ENCODE measurements at regions of chr6 and their contacts with region 1.

Region 1: GRCh38 chr6:107847844-107848802 is 24.0 kb upstream of the SCML4 start:
- DNase-seq: peak; percentile 80
- H3K27ac ChIP-seq: no peak overlapping the region
- CTCF ChIP-seq: peak; percentile 94

Region 2: DNA sequence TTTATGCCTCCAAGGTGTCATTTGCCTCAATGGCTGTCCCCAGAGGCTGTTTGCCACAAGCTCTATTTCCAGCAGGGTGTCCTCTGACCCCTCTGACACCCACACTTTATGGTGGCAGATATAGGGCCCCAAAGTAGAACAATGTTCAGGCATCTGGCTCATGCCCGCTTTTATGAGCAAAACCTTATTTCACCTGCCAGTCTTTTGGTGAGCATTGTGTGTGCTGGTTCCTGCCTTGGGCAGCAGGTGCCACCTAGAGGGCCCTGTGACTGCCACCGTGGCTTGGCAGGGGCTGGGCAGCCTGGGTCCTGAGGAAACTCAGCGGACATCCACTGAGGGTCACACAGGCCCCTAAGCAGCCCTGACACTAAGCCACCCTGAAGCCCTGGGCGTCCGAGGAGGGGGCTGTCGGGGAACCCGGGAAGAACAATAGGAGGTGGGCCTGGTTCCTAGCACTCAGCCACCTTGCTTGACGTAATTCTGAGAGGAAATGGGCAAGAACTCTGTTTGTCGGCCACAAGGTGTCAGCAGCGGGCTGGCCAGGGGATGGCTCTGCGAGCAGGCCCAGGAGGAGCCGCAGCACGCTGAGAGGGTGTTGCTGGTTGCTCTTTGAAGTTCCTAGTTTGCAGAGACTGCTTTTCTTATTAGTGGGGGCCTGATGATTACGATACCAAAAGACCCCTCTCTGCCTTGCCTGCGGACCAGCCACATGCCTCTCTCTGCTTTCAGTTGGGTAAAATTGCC is 173.0 kb before region 1 on chr6:
- CTCF ChIA-PET with region 1: interaction called, 11 read pairs
- POLR2A ChIA-PET with region 1: no interaction called
- DNase-seq: peak; percentile 80
- H3K27ac ChIP-seq: no peak overlapping the region
- CTCF ChIP-seq: peak; percentile 87

Region 3: DNA sequence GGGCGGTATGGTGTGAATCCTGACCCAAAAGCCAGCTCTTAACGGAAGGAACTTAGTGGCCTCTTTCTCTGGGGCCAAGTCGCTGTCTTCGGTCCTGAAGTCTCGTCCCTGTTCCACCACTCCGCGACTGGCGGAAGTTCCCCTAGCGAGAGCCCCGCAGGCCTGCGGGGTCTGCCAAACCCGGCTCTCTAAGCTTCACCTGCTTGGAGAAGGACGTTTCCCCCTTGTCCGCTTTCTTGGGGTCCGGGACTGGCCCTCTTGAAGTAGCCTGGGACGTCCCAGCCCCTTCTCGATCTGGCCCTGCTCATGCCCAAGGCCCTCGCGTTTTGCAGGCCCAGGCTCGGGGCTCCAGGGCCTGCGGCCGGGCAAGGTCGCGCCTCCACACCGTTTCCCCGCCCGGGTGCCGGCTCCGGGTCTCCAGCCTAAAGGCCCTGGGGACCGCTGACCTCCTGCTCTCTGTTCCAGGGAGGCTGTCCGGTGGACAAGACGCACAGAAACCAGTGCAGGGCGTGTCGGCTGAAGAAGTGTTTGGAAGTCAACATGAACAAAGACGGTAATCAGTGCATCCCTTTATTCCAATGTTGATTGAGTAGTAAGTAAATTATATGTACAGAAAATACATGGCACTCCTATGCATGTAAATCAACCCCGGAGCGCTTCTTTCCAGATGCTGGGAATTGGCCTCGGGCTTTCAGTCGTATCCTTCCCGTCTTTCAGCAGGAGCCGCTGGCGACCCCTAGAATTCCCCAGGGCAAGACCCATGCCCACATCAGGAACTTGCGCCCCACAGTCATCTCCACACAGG is 326.4 kb after region 1 on chr6:
- CTCF ChIA-PET with region 1: no interaction called
- POLR2A ChIA-PET with region 1: no interaction called
- DNase-seq: no peak
- H3K27ac ChIP-seq: no peak overlapping the region
- CTCF ChIP-seq: no peak